ENCODE measurements at regions of chr1 and their contacts with region 1.

Region 1: GRCh38 chr1:82346141-82346540 is 545.4 kb downstream of the ADGRL2 start:
- DNase-seq: no peak
- ATAC-seq: no peak
- H3K4me3 ChIP-seq: no peak overlapping the region
- H3K27ac ChIP-seq: no peak overlapping the region
- H3K4me1 ChIP-seq: no peaks in the 10 kb centered on the region
- H3K27me3 ChIP-seq: no peaks in the 10 kb centered on the region
- CTCF ChIP-seq: no peak

Region 2: DNA sequence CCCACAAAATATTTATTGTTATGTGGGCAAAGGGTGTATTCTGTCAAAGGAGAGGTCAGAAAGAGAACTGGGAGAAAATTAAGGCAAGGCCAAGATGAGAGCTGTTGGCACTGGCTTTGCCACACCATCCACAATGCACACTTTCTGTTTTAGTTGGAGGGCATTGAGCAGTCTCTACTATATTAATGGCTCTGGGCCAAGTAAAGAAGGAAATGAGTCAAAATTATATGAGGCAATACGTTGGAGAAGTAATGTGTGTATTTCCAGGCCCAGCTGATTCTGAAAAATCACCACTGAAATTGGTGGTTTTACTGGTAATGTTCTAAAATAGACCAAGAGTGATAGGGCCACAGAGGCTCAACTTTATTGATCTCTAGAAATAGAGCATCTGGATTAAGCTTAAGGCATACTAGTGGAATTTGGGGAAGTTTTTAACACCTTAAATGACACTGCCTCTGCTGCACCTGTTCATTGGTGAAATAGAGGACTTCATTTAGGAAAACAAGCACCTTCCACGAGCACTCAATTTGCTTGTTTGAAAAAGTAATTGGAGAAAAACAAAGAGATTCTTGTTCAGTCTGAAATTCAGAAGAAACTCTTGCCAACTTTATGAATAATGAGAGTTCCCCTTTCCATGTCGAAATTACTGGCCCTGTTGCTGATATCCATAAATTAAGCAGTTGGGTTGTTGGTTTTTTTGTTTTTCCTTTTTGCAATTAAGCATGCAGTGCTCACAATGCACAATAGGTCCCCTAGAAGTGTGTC is 120.5 kb before region 1 on chr1:
- intact Hi-C with region 1: no loop called
- DNase-seq: no peak
- ATAC-seq: peak in 7 of 8 donors; percentile 52 to 81 (median 58)
- H3K4me3 ChIP-seq: no peak overlapping the region
- H3K27ac ChIP-seq: peak overlapping the region in 3 of 10 donors; percentile 15 to 80 (median 40)
- H3K4me1 ChIP-seq: peaks cover 0 to 36% (median 27%) of the 10 kb centered on the region in 9 donors
- H3K27me3 ChIP-seq: no peaks in the 10 kb centered on the region
- CTCF ChIP-seq: no peak

Region 3: DNA sequence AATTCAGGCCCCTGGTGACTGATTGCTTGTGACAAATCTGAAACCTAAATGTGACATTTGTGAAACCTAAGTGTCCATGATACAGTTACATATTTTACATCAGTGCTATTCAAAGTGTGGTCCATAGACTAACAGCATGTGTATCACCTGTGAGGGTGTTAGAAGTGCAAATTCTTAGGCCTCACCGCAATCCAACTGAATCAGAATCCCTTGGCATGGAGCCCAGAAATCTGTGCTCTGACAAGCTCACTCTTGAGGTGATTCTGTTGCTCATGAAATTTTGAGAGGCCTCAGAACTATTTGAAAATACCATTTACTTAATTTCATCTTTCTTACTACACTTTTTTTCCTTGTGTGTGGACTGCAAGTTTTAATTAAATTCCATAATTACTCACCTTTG is 42.5 kb after region 1 on chr1:
- intact Hi-C with region 1: loop called in 1 of 10 experiments (anchors 5 kb)
- DNase-seq: no peak
- ATAC-seq: no peak
- H3K4me3 ChIP-seq: no peak overlapping the region
- H3K27ac ChIP-seq: no peak overlapping the region
- H3K4me1 ChIP-seq: no peaks in the 10 kb centered on the region
- H3K27me3 ChIP-seq: no peaks in the 10 kb centered on the region
- CTCF ChIP-seq: no peak